Transverse colon (tissue), 4 donors: ENCODE measurements at regions of chr9 and their contacts with region 1.

Region 1: DNA sequence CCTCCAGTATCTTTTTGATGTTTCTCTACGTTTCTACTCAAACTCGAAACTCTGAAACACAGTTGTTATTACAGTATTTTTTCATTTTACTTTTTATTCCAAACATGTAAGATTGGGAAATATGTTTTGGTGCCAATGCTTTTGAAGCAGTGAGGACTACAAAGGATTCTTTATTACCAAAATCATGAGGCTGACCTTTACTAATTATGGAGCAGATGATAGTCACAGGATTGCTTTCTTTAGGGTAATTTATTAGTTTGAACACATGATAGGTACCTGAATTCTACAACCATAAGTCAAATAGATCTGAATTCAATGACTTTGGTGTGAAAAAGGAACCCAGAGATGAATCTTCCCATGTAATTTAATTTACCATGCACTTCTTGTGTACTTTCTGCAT is 2015.1 kb upstream of the C9orf72 start:
- DNase-seq: no peak
- H3K4me3 ChIP-seq: no peak overlapping the region
- H3K27ac ChIP-seq: no peak overlapping the region
- H3K4me1 ChIP-seq: no peaks in the 10 kb centered on the region
- H3K27me3 ChIP-seq: no peaks in the 10 kb centered on the region
- CTCF ChIP-seq: no peak
- EP300 ChIP-seq: no peak
- POLR2A ChIP-seq: no peak

Region 2: GRCh38 chr9:28365020-28365640 is 1223.2 kb before region 1 on chr9:
- in situ Hi-C with region 1: no loop called
- intact Hi-C with region 1: no loop called
- DNase-seq: no peak
- H3K4me3 ChIP-seq: no peak overlapping the region
- H3K27ac ChIP-seq: no peak overlapping the region
- H3K4me1 ChIP-seq: no peaks in the 10 kb centered on the region
- H3K27me3 ChIP-seq: no peaks in the 10 kb centered on the region
- CTCF ChIP-seq: no peak
- EP300 ChIP-seq: no peak
- POLR2A ChIP-seq: no peak

Region 3: GRCh38 chr9:29514336-29514735 is 74.0 kb before region 1 on chr9:
- in situ Hi-C with region 1: no loop called
- intact Hi-C with region 1: no loop called
- DNase-seq: no peak
- H3K4me3 ChIP-seq: no peak overlapping the region
- H3K27ac ChIP-seq: no peak overlapping the region
- H3K4me1 ChIP-seq: no peaks in the 10 kb centered on the region
- H3K27me3 ChIP-seq: no peaks in the 10 kb centered on the region
- CTCF ChIP-seq: no peak
- EP300 ChIP-seq: no peak
- POLR2A ChIP-seq: no peak

Region 4: GRCh38 chr9:29659014-29659413 is 70.7 kb after region 1 on chr9:
- in situ Hi-C with region 1: loop called in 1 of 4 experiments (anchors 10 kb)
- intact Hi-C with region 1: no loop called
- DNase-seq: no peak
- H3K4me3 ChIP-seq: no peak overlapping the region
- H3K27ac ChIP-seq: no peak overlapping the region
- H3K4me1 ChIP-seq: no peaks in the 10 kb centered on the region
- H3K27me3 ChIP-seq: no peaks in the 10 kb centered on the region
- CTCF ChIP-seq: no peak
- EP300 ChIP-seq: no peak
- POLR2A ChIP-seq: no peak